ENCODE measurements at regions of chr13 and their contacts with region 1.

Region 1: GRCh38 chr13:95676762-95677563 is at the start of gene DNAJC3:
- DNase-seq: peak; percentile 96 to 100 (median 99)

Region 2: GRCh38 chr13:95644601-95645052 is 32.3 kb before region 1 on chr13 and contains the start of gene DZIP1:
- intact Hi-C with region 1: loop called (anchors 2 kb)
- DNase-seq: peak; percentile 57 to 98 (median 86)

Region 3: GRCh38 chr13:95660981-95661581 is 15.9 kb before region 1 on chr13:
- intact Hi-C with region 1: no loop called
- DNase-seq: no peak

Measured in posterior cingulate gyrus (tissue), 11 donors.